Activated CD4-positive, alpha-beta T cell treated with anti-CD3 and anti-CD28 coated beads, Interleukin-2, amount 10 ng/mL, durations not matched to agents 24 days and 14 days (primary cell): ENCODE measurements at regions of chrX and their contacts with region 1.

Region 1: DNA sequence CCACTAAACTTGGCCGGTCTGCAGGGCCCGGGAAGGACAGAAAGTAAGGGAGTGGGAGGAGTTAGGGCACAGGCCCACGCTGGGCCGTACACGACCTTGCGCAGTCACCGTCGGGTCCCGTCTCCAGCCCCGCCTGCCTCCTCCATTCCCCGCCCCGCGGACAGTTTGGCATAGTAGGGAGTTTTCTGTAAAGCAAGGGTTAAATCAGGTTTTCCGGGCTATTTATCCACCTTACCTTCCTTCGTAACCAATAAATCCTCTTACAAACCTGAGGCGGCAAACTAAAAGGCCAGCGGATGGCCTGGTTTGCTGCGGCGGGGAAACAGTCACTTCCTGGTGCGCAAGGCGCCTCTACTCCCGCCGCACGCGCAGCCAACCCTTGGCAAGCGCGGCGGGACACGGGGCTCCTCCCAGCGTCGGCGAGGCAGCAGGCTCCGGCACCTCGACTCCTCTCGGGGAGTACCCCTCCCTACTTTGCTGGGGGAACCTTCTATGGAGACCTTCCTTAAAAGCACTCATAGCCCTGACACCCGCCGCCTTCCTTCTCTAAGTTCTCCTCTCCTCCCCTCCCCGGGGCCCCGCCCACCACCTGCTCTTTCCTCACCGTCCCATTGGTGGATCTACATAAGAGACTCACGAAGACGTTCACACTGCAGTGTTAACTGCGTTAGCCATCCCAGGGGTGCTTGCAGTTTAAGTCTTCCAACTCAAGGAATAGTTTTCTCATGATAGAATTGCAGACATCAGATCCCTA is at the start of gene TRMT2B:
- DNase-seq: peak; percentile 93
- H3K4me3 Mint-ChIP-seq: peak within 1 kb of the TSS; percentile 92
- H3K27ac Mint-ChIP-seq: peak within 1 kb of the TSS; percentile 97
- H3K4me1 Mint-ChIP-seq: peaks cover 16% of the 10 kb centered on the region
- H3K27me3 Mint-ChIP-seq: no peaks in the 10 kb centered on the region
- total RNA-seq, gene TRMT2B: 19.7 and 19.8 TPM in 2 replicates

Region 2: GRCh38 chrX:100363896-100364295 is 687.8 kb before region 1 on chrX:
- intact Hi-C with region 1: no loop called
- DNase-seq: no peak
- H3K4me3 Mint-ChIP-seq: no peak overlapping the region
- H3K27ac Mint-ChIP-seq: no peak overlapping the region
- H3K4me1 Mint-ChIP-seq: no peaks in the 10 kb centered on the region
- H3K27me3 Mint-ChIP-seq: no peaks in the 10 kb centered on the region

Region 3: GRCh38 chrX:100829730-100830129 is 222.0 kb before region 1 on chrX:
- intact Hi-C with region 1: loop called (anchors 5 kb)
- DNase-seq: peak; percentile 66
- H3K4me3 Mint-ChIP-seq: peak overlapping the region; percentile 81
- H3K27ac Mint-ChIP-seq: peak overlapping the region; percentile 97
- H3K4me1 Mint-ChIP-seq: peaks cover 24% of the 10 kb centered on the region
- H3K27me3 Mint-ChIP-seq: no peaks in the 10 kb centered on the region

Region 4: GRCh38 chrX:100928660-100929613 is 122.8 kb before region 1 on chrX and contains the start of gene XKRX:
- intact Hi-C with region 1: no loop called
- DNase-seq: peak; percentile 68
- H3K4me3 Mint-ChIP-seq: peak within 1 kb of the TSS; percentile 88
- H3K27ac Mint-ChIP-seq: no peak within 1 kb of the TSS
- H3K4me1 Mint-ChIP-seq: peaks cover 16% of the 10 kb centered on the region
- H3K27me3 Mint-ChIP-seq: peaks cover 3% of the 10 kb centered on the region
- total RNA-seq, gene XKRX: 0.12 and 0.23 TPM in 2 replicates

Region 5: DNA sequence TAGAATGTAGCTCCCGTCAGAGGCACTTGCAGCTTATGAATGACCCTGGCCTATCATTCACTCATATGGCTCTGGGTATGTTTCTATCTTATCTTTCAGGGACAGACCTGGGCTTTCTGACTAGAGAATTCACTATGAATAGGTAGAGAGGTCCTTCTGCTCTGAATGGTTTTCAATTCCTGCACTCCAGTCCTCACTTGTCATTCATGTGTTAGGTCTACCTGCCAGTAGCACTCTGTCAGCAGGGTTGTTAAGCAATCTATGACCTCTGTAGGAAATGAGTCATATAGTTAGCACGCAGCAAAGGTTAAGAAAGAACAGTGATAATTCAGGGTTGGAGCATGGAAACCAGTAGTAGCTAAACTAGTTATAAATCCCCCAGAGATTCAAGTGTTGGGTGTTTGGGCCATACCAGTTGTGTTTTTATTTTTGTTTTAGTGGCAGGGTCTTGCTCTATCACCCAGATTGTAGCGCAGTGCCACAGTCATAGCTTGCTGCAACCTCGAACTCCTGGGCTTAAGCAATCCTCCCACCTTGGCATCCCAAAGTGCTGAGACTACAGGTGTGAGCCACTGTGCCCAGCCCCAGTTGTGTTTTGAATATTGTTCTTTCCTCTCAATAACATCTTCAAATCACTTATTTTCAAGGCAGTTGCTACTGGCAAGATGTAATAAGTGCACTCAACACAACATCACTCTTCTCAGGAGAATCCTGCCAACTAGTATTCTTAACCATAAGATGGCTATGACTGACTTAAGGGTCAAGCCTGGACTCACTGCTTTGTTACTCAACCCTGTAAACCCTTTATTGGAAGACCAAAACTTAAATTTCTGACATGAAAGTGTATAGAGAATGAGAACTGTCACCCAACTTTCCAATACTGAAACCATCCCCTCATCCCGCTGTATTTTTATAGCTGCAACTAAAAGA is 57.1 kb before region 1 on chrX:
- intact Hi-C with region 1: loop called (anchors 2 kb)
- DNase-seq: peak; percentile 57
- H3K4me3 Mint-ChIP-seq: peak overlapping the region; percentile 55
- H3K27ac Mint-ChIP-seq: peak overlapping the region; percentile 86
- H3K4me1 Mint-ChIP-seq: peaks cover 17% of the 10 kb centered on the region
- H3K27me3 Mint-ChIP-seq: no peaks in the 10 kb centered on the region

Region 6: DNA sequence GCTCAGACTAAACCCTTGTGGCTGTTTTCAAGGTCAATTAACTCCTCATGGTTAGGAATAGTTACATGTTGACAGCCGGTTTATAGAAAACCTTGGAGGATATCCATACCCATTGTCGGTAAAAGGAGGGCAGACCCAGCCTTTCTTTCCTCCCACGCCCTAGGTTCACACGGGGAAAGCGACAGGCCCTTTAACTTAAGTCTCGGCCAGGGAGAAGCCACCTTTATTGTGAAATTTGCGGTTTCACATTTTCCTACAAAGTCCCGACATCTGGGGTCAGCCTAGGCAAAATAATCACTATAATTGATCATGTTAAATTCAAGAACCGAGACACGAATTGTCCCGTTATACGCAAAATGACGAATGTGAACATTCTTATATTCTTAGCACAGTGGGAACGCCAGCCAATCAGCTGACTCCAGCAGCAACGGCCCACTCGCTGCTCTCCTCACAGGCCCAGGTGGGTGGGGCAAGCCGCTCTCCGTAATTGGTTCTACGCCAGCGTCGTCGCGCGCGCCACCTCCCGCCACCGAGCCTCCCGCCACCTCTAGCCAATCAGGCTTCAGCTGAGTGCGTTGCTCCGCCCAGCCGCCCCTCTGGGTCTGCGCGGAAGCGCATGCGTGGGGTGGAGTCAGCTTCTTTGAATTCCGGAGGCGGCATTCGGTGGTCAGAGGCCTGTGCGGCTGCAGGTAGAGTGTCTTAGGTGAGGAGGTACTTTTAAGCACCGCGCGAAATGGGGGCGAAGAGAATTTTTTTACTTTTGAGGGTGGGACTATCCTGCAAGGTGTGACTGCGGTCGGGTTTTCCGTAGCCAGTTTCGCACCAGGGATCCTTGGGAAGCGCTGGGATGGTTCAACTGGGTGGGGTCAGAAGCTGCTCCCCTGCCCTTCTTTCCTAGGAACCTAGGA is 46.1 kb after region 1 on chrX and contains the start of gene CENPI:
- intact Hi-C with region 1: loop called (anchors 1 kb)
- DNase-seq: peak; percentile 98
- H3K4me3 Mint-ChIP-seq: peak within 1 kb of the TSS; percentile 96
- H3K27ac Mint-ChIP-seq: peak within 1 kb of the TSS; percentile 89
- H3K4me1 Mint-ChIP-seq: peaks cover 24% of the 10 kb centered on the region
- H3K27me3 Mint-ChIP-seq: no peaks in the 10 kb centered on the region
- total RNA-seq, gene CENPI: 14.9 and 19.4 TPM in 2 replicates

Region 7: GRCh38 chrX:101348452-101349192 is 296.9 kb after region 1 on chrX and contains the start of gene TIMM8A:
- intact Hi-C with region 1: loop called (anchors 10 kb)
- DNase-seq: peak; percentile 94
- H3K4me3 Mint-ChIP-seq: peak within 1 kb of the TSS; percentile 92
- H3K27ac Mint-ChIP-seq: peak within 1 kb of the TSS; percentile 93
- H3K4me1 Mint-ChIP-seq: peaks cover 2% of the 10 kb centered on the region
- H3K27me3 Mint-ChIP-seq: no peaks in the 10 kb centered on the region
- total RNA-seq, gene TIMM8A: 28.3 and 32.8 TPM in 2 replicates